ENCODE measurements at regions of chr2 and their contacts with region 1.

Region 1: GRCh38 chr2:113173542-113174395 is at the start of gene PSD4:
- DNase-seq: peak; percentile 61 to 92 (median 90)
- ATAC-seq: peak; percentile 88
- H3K4me3 ChIP-seq: peak within 1 kb of the TSS; percentile 80
- H3K4me3 Mint-ChIP-seq: peak within 1 kb of the TSS; percentile 87 to 99 (median 94)
- H3K27ac ChIP-seq: peak within 1 kb of the TSS; percentile 92
- H3K27ac Mint-ChIP-seq: peak within 1 kb of the TSS; percentile 89 to 98 (median 93)
- H3K4me1 ChIP-seq: peaks cover 67 to 68% of the 10 kb centered on the region in 2 donors
- H3K4me1 Mint-ChIP-seq: peaks cover 58 to 84% (median 72%) of the 10 kb centered on the region in 7 donors
- H3K27me3 ChIP-seq: no peaks in the 10 kb centered on the region
- H3K27me3 Mint-ChIP-seq: peaks cover 0 to 5% (median 0%) of the 10 kb centered on the region in 5 donors
- total RNA-seq, gene PSD4: 96.4 to 399 (median 167) TPM

Region 2: DNA sequence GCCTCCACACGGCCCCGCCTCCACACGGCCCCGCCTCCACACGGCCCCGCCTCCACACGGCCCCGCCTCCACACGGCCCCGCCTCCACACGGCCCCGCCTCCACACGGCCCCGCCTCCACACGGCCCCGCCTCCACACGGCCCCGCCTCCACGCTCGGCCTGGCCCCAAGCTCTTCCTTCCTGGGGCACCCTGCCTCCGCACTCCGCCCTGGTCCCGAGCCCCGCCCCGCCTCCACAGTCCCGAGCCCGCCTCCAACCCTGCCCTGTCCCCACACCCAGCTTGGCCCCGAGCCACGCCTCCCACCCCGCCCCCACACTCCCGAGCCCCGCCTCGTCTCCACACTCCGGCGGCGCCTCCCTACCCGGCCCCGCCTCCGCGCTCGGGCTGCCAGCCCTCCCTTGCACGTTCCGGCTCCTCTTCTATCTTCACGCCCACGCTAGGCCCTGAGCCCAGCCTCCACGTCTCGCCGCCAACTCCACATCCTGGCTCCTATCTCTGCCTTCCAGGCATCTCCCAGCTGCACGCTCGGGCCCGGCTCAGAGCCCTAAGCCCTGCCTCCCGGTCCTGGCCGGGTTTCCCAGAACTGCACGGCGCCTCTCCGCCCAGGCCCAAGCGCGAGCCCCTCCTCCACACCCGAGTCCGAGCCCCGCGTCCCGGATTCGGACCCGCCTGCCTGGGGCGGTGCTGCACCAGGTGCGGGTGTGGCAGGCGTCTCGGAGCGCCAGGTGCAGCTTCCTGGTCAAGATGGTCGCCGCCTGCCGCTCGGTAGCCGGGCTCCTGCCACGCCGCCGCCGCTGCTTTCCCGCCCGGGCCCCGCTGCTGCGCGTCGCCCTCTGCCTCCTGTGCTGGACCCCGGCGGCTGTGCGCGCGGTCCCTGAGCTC is 1118.7 kb before region 1 on chr2 and contains the start of gene TMEM87B:
- CTCF ChIA-PET with region 1: no interaction called
- POLR2A ChIA-PET with region 1: no interaction called
- intact Hi-C with region 1: loop called in 1 of 2 experiments (anchors 10 kb)
- DNase-seq: peak; percentile 90 to 98 (median 96)
- ATAC-seq: peak; percentile 80
- H3K4me3 ChIP-seq: peak within 1 kb of the TSS; percentile 85
- H3K4me3 Mint-ChIP-seq: peak within 1 kb of the TSS; percentile 80 to 100 (median 95)
- H3K27ac ChIP-seq: peak within 1 kb of the TSS; percentile 82
- H3K27ac Mint-ChIP-seq: peak within 1 kb of the TSS; percentile 92 to 100 (median 98)
- H3K4me1 ChIP-seq: peaks cover 16 to 19% of the 10 kb centered on the region in 2 donors
- H3K4me1 Mint-ChIP-seq: peaks cover 33 to 48% (median 42%) of the 10 kb centered on the region in 7 donors
- H3K27me3 ChIP-seq: no peaks in the 10 kb centered on the region
- H3K27me3 Mint-ChIP-seq: peaks cover 0 to 2% (median 0%) of the 10 kb centered on the region in 5 donors
- total RNA-seq, gene TMEM87B: 14.0 to 26.9 (median 17.4) TPM

Region 3: GRCh38 chr2:112996635-112997034 is 177.1 kb before region 1 on chr2:
- CTCF ChIA-PET with region 1: no interaction called
- POLR2A ChIA-PET with region 1: interaction called, 3 read pairs
- intact Hi-C with region 1: loop called (anchors 2 kb)
- DNase-seq: peak; percentile 35 to 92 (median 90)
- ATAC-seq: peak; percentile 99
- H3K4me3 ChIP-seq: peak overlapping the region; percentile 20
- H3K4me3 Mint-ChIP-seq: peak overlapping the region; percentile 51 to 83 (median 71)
- H3K27ac ChIP-seq: peak overlapping the region; percentile 74
- H3K27ac Mint-ChIP-seq: peak overlapping the region; percentile 88 to 100 (median 97)
- H3K4me1 ChIP-seq: peaks cover 13 to 49% of the 10 kb centered on the region in 2 donors
- H3K4me1 Mint-ChIP-seq: peaks cover 29 to 73% (median 62%) of the 10 kb centered on the region in 7 donors
- H3K27me3 ChIP-seq: no peaks in the 10 kb centered on the region
- H3K27me3 Mint-ChIP-seq: peaks cover 0 to 16% (median 0%) of the 10 kb centered on the region in 5 donors

Region 4: GRCh38 chr2:113187771-113188170 is 14.0 kb after region 1 on chr2:
- CTCF ChIA-PET with region 1: interaction called, 3 read pairs
- POLR2A ChIA-PET with region 1: interaction called, 16 read pairs
- intact Hi-C with region 1: loop called in 1 of 2 experiments (anchors 1 kb)
- DNase-seq: no peak
- ATAC-seq: no peak
- H3K4me3 ChIP-seq: no peak overlapping the region
- H3K4me3 Mint-ChIP-seq: peak overlapping the region in 6 of 10 donors; percentile 7 to 61 (median 40)
- H3K27ac ChIP-seq: peak overlapping the region; percentile 28
- H3K27ac Mint-ChIP-seq: peak overlapping the region in 8 of 9 donors; percentile 26 to 90 (median 84)
- H3K4me1 ChIP-seq: peaks cover 28 to 43% of the 10 kb centered on the region in 2 donors
- H3K4me1 Mint-ChIP-seq: peaks cover 50 to 77% (median 70%) of the 10 kb centered on the region in 7 donors
- H3K27me3 ChIP-seq: no peaks in the 10 kb centered on the region
- H3K27me3 Mint-ChIP-seq: no peaks in the 10 kb centered on the region

Region 5: GRCh38 chr2:113203901-113204519 is 30.2 kb after region 1 on chr2:
- CTCF ChIA-PET with region 1: interaction called, 32 read pairs
- POLR2A ChIA-PET with region 1: interaction called, 32 read pairs
- intact Hi-C with region 1: loop called (anchors 1 kb)
- DNase-seq: peak; percentile 50 to 84 (median 76)
- ATAC-seq: peak; percentile 92
- H3K4me3 ChIP-seq: no peak overlapping the region
- H3K4me3 Mint-ChIP-seq: peak overlapping the region in 9 of 10 donors; percentile 23 to 63 (median 48)
- H3K27ac ChIP-seq: peak overlapping the region; percentile 63
- H3K27ac Mint-ChIP-seq: peak overlapping the region; percentile 65 to 94 (median 87)
- H3K4me1 ChIP-seq: peaks cover 9 to 10% of the 10 kb centered on the region in 2 donors
- H3K4me1 Mint-ChIP-seq: peaks cover 15 to 49% (median 31%) of the 10 kb centered on the region in 7 donors
- H3K27me3 ChIP-seq: no peaks in the 10 kb centered on the region
- H3K27me3 Mint-ChIP-seq: no peaks in the 10 kb centered on the region

Region 6: GRCh38 chr2:113361051-113361450 is 187.3 kb after region 1 on chr2:
- CTCF ChIA-PET with region 1: no interaction called
- POLR2A ChIA-PET with region 1: no interaction called
- intact Hi-C with region 1: no loop called
- DNase-seq: no peak
- ATAC-seq: no peak
- H3K4me3 ChIP-seq: no peak overlapping the region
- H3K4me3 Mint-ChIP-seq: no peak overlapping the region
- H3K27ac ChIP-seq: no peak overlapping the region
- H3K27ac Mint-ChIP-seq: no peak overlapping the region
- H3K4me1 ChIP-seq: no peaks in the 10 kb centered on the region
- H3K4me1 Mint-ChIP-seq: peaks cover 0 to 36% (median 1%) of the 10 kb centered on the region in 7 donors
- H3K27me3 ChIP-seq: no peaks in the 10 kb centered on the region
- H3K27me3 Mint-ChIP-seq: no peaks in the 10 kb centered on the region

Region 7: DNA sequence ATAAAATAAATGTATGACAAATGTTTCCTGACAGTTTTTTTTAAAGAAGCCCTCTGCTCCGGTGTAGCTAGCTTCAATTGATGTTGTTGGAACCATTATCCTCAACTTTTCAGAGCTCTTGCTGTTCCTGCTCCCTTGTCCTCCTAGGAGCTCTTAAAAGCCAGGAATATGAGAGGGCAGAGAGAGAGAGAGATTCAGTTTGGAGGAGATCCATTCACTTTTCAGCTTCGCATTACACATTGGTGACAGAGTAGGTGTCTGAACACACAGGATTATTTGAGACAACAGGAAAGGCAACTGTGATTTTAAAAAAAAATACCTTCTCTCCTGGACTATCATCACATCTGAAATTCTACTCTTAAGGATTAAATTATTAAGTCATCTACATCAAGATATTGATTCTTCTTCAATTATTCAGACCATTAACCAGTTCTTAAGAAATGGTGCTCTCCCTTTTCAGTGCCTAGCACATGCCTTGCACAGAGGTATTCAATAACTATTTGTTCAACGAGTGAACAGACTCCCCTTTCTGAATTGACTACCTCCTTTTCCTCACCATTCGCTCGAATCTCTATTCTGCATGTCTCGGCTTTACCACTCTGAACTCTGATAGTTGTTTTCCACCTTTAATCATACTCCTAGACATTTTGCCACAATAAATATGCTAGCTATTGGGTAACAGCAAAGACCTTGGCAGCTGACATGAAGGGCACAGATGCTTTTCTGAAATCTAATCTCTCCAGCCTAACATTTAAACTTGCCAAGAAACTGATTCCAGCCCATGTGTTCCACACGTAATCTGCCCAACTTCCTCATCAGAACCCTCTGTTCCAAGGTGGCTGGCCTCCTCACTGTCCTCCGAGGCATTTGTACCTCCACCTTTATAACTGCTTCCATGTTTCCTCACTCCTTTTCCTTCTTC is 611.3 kb after region 1 on chr2:
- CTCF ChIA-PET with region 1: no interaction called
- POLR2A ChIA-PET with region 1: no interaction called
- intact Hi-C with region 1: no loop called
- DNase-seq: no peak
- ATAC-seq: no peak
- H3K4me3 ChIP-seq: no peak overlapping the region
- H3K4me3 Mint-ChIP-seq: no peak overlapping the region
- H3K27ac ChIP-seq: no peak overlapping the region
- H3K27ac Mint-ChIP-seq: no peak overlapping the region
- H3K4me1 ChIP-seq: no peaks in the 10 kb centered on the region
- H3K4me1 Mint-ChIP-seq: peaks cover 0 to 6% (median 4%) of the 10 kb centered on the region in 7 donors
- H3K27me3 ChIP-seq: no peaks in the 10 kb centered on the region
- H3K27me3 Mint-ChIP-seq: no peaks in the 10 kb centered on the region

Measured in naive thymus-derived CD4-positive, alpha-beta T cell (primary cell).